ENCODE measurements at regions of chr1 and their contacts with region 1.

Region 1: GRCh38 chr1:25997828-25998761 is at the start of gene PAFAH2:
- DNase-seq: peak; percentile 84 to 99
- H3K4me3 ChIP-seq: peak within 1 kb of the TSS; percentile 58 to 75
- H3K27ac ChIP-seq: peak within 1 kb of the TSS; percentile 84 to 86
- H3K4me1 ChIP-seq: peaks cover 4 to 6% of the 10 kb centered on the region in 2 donors
- H3K27me3 ChIP-seq: no peaks in the 10 kb centered on the region
- CTCF ChIP-seq: peak; percentile 94 to 100 (median 94)
- total RNA-seq, gene PAFAH2: 1.3 TPM

Region 2: DNA sequence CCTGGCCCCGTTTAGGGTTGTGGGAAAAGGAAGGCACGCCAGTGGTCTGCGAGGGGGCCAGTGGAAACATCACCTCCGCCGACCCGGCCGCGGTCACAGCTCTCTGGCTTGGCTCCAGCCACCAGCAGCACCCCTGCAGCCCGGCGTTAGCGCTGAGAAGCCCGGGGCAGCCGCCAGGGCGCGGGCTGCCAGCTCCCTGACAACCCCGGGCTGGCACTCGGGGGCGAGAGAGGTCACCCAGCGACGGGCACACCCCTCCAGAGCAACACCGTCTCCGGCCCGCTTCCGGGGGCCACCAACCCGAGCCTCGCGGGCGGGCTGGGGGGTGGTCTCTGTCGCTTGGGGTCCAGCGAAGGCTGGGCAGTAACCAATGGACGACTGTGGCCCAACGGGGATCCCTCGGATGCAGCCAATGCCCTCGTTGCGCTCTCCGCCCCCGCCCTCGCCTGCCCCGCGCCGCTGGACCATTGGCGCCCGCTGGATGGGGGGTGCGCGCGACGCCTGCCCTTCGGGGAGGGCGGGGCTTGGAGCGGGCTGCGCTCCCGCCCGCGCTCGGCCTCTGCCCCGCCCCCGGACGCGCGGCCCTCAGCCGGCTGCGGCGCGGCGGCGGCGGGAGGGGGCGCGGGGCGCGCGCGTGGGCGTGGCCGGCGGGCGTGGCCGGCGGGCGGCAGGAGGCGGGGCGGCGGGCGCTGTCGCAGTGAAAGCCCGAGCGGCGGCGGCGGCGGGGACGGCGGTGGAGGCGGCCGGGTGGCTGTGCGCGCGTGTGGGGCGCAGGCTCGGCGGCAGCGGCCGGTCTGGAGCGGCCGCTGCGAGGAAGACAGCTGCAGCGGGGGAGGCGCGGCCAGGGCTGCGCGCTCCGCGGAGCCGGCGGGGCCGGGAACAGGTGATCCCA is 381.8 kb before region 1 on chr1 and contains the start of gene MAN1C1:
- intact Hi-C with region 1: loop called (anchors 5 kb)
- DNase-seq: peak; percentile 47 to 93
- H3K4me3 ChIP-seq: peak within 1 kb of the TSS; percentile 93 to 99
- H3K27ac ChIP-seq: peak within 1 kb of the TSS; percentile 83
- H3K4me1 ChIP-seq: peaks cover 14 to 19% of the 10 kb centered on the region in 2 donors
- H3K27me3 ChIP-seq: no peaks in the 10 kb centered on the region
- CTCF ChIP-seq: peak; percentile 51 to 62 (median 53)
- total RNA-seq, gene MAN1C1: 14.3 TPM

Region 3: DNA sequence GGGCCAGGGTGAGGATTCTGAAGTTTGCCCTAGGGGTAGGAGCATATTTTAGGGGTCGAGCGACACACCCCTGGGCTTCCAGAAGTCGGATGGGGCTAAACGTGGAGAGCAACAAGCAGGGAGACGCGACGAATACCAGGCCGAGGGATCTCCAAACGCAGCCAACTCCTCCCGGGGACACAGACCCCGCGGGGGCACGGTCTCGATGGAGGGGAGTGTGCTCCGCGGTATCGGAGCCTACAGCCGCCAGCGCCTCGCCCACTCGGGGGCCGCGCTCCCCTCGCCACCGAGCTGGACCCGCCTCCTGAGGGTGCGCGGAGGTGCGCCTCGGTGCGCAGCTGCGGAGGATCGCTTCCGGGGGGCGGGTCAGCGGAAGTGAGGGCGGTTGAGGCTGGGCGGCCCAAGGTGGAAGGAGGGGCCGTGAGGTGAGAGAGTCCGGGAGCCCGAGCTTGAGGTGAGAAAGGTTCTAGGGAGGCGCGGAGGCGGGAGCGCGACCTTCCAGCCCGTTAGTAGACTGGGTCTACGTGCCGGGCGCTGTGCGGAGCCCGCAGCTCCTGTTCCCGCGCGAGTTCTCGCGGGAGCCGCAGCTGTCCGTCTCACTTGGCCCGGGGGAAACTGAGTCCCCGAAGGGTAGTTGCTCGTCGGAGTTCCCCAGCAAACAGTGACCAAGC is 178.4 kb before region 1 on chr1 and contains the start of gene MTFR1L:
- intact Hi-C with region 1: loop called (anchors 2 kb)
- DNase-seq: peak in 1 of 2 donors; percentile 93
- H3K4me3 ChIP-seq: peak within 1 kb of the TSS; percentile 69 to 91
- H3K27ac ChIP-seq: peak within 1 kb of the TSS; percentile 89
- H3K4me1 ChIP-seq: peaks cover 10 to 22% of the 10 kb centered on the region in 2 donors
- H3K27me3 ChIP-seq: no peaks in the 10 kb centered on the region
- CTCF ChIP-seq: no peak
- total RNA-seq, gene MTFR1L: 20.9 TPM

Region 4: DNA sequence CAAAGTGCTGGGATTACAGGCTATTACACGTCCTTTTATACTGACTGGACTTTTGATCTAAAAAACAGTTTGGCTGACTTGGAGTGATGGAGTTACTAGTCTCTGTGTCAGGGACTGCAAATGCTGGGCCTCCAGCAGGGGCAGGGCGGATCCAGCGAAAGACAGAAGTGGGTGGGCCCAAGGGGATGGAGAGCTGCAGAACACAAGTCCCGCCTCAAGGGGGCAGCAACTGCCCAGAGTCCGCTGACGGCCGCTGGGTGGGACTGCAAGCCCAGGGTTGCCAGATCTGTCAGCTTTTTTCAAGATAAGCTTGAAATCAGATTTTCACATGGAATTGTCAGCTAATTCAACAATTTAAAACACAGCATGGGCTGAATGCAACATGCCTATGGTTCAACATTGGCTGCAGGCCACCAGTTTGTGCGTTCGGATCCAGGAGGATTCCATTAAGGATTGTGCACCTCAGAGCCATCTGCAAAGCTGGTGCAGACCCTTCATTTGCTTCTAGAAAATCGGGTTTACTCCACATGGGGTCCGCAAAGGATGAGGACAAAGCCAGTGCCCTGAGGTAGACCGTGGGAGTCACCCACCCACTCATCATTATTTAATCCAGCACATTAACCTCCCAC is 102.6 kb before region 1 on chr1:
- intact Hi-C with region 1: loop called (anchors 1 kb)
- DNase-seq: peak; percentile 51 to 94
- H3K4me3 ChIP-seq: peak overlapping the region in 1 of 2 donors; percentile 9
- H3K27ac ChIP-seq: no peak overlapping the region
- H3K4me1 ChIP-seq: peaks cover 6 to 19% of the 10 kb centered on the region in 2 donors
- H3K27me3 ChIP-seq: no peaks in the 10 kb centered on the region
- CTCF ChIP-seq: peak; percentile 99

Region 5: DNA sequence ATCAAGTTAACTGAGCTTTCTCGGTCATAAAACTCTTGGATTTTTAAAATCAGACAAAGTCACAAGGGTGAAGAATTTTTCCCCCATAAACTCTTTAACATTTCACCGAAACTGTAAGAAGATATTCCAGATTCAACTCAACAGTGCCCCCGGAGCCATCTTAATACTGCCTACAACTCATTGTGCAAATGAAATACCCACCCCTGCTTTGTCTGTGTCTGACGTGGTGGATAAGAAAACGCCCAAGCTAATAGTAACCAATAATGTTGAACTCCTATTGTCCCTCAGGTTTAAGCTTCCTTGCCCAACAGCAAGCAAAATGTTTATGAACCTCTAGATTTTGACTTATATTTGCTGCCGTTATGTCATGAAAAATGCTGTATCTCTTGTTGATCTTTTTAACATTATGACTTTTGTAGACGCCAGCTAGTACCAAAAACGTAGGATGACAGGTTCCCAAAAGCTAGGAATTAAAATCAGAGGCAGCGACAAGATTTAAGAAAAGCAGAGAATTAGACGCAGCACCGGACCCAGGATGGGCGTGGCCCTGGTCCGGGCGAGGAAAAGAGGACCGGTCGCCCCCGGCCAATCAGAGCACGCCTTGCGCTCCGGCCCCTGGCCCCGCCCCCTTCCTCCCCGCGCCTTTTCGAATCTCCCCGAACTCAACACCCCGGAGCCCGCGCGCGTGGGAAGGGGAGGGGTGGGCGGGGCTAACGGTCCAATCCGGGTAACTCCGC is 93.0 kb before region 1 on chr1:
- intact Hi-C with region 1: loop called (anchors 1 kb)
- DNase-seq: peak; percentile 81 to 97
- H3K4me3 ChIP-seq: peak overlapping the region; percentile 74 to 90
- H3K27ac ChIP-seq: peak overlapping the region; percentile 32 to 65
- H3K4me1 ChIP-seq: peaks cover 0 to 13% of the 10 kb centered on the region in 2 donors
- H3K27me3 ChIP-seq: no peaks in the 10 kb centered on the region
- CTCF ChIP-seq: no peak

Region 6: DNA sequence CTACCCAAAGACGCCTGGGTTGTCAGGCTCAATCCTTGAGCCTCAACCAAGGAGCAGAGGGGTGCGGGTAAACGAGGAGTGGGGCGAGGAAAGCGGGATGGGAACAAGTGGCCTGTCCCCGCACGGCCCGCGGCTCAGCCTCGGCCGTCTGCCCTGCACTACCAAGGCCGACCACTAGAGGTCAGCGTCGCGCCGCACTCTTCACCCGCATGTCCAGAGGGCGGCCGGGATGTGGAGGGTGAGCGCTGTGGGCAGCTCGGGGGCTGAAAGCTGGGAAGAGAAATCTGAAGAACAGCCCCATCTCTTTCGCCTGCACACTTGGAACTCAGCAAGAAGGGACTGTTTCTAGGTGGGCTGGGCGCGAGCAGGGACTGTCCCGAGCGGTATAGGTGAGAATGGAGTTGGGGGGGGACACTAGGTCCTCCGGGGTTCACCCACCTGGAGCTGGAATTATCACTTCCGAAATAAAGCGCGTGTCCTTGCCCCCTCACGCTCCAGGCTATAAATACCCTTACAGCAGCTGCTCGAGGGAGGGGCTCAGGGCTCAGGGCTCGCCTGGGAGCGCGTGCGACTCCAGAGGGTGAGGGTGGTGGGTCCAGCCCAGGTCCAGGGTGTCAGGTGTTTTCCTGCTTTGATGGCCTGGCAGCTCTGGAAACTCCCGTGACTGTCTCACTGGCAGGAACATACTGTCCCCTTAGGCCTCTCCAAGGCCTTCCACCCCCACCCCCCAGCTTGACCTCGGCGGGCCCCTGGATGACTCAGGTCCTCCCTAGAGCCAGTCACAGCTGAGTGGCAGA is 38.1 kb after region 1 on chr1:
- intact Hi-C with region 1: loop called (anchors 1 kb)
- DNase-seq: peak; percentile 20 to 87
- H3K4me3 ChIP-seq: peak overlapping the region; percentile 62 to 92
- H3K27ac ChIP-seq: peak overlapping the region; percentile 62 to 75
- H3K4me1 ChIP-seq: peaks cover 3 to 8% of the 10 kb centered on the region in 2 donors
- H3K27me3 ChIP-seq: no peaks in the 10 kb centered on the region
- CTCF ChIP-seq: peak; percentile 97 to 100 (median 100)

Region 7: DNA sequence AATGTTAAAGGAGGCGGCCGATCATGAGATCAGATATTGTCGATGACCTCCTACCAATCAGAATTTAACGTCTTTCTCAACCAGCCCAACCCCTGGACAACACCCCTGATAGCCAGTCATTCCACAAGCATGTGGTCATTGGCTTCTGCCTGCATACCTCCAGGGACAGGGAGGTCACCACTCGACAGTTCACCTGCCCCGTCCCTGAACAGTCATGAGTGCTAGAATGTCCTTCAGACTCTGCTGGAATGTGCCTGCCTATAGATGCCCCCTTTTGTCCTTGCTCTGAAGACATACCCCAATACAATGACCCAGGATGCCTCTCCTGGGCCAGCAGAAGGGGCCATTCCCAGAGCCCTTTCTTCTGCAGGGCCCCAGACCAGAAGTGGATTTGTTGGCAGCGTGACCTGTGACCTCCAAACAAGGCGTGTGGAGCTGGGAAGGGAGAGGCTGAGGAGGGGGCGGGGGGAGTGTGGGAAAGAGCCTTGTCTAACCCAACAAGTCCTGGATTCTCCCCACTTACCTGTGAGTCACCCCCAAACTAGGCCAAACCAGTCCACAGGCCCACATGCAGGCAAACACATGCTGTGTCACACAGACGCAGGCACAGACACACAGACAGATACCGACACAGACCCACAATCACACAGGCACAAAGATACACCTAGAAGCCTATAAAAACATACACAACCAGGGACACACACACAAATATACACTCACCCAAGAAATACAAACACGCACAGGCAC is 353.7 kb after region 1 on chr1:
- intact Hi-C with region 1: no loop called
- DNase-seq: no peak
- H3K4me3 ChIP-seq: no peak overlapping the region
- H3K27ac ChIP-seq: no peak overlapping the region
- H3K4me1 ChIP-seq: no peaks in the 10 kb centered on the region
- H3K27me3 ChIP-seq: no peaks in the 10 kb centered on the region
- CTCF ChIP-seq: no peak

Measured in ascending aorta (tissue), 2 donors.